ENCODE measurements at regions of chr16 and their contacts with region 1.

Region 1: GRCh38 chr16:55543472-55543871 is 23.0 kb upstream of the CAPNS2 start:
- DNase-seq: no peak
- ATAC-seq: peak in 1 of 4 donors; percentile 67
- H3K4me3 ChIP-seq: no peak overlapping the region
- H3K27ac ChIP-seq: no peak overlapping the region
- H3K4me1 ChIP-seq: peaks cover 0 to 24% (median 0%) of the 10 kb centered on the region in 12 donors
- H3K27me3 ChIP-seq: no peaks in the 10 kb centered on the region
- CTCF ChIP-seq: peak in 11 of 12 donors; percentile 20 to 69 (median 39)
- POLR2A ChIP-seq: no peak

Region 2: GRCh38 chr16:55465077-55465896 is 78.2 kb before region 1 on chr16:
- intact Hi-C with region 1: loop called (anchors 1 to 2 kb)
- DNase-seq: peak; percentile 82 to 90 (median 86)
- ATAC-seq: peak; percentile 84 to 95 (median 90)
- H3K4me3 ChIP-seq: peak overlapping the region in 1 of 12 donors; percentile 21
- H3K27ac ChIP-seq: no peak overlapping the region
- H3K4me1 ChIP-seq: peaks cover 0 to 5% (median 0%) of the 10 kb centered on the region in 12 donors
- H3K27me3 ChIP-seq: no peaks in the 10 kb centered on the region
- CTCF ChIP-seq: peak; percentile 99 to 100 (median 100)
- POLR2A ChIP-seq: no peak

Region 3: DNA sequence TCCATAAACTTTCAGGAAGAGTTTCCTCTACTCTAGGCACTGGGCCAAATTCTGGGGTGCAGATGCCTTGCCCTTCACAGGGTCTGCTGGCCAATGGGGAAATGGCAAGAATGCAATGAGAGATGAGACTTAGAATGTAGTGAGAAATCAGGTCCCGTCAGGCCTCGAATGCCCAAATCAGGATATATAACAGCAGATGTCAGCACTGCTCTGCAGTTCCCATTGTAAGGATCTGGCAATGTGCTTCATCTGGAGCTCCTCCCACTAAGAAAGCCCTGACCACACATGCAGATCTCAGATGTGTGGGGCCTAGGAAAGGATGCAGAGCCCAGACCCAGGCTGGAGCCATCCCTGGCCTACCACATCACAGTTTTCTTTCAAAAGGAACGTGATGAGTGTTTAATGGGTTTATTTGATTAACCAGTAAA is 48.5 kb before region 1 on chr16:
- intact Hi-C with region 1: loop called in 7 of 10 experiments (anchors 2 to 10 kb)
- DNase-seq: peak in 2 of 5 donors; percentile 52 to 58
- ATAC-seq: peak; percentile 67 to 93 (median 74)
- H3K4me3 ChIP-seq: no peak overlapping the region
- H3K27ac ChIP-seq: no peak overlapping the region
- H3K4me1 ChIP-seq: peaks cover 0 to 34% (median 10%) of the 10 kb centered on the region in 12 donors
- H3K27me3 ChIP-seq: no peaks in the 10 kb centered on the region
- CTCF ChIP-seq: peak in 11 of 12 donors; percentile 27 to 67 (median 46)
- POLR2A ChIP-seq: no peak

Region 4: GRCh38 chr16:55508941-55509931 is 34.2 kb before region 1 on chr16 and contains the start of gene LPCAT2:
- intact Hi-C with region 1: loop called in 1 of 10 experiments (anchors 5 kb)
- DNase-seq: peak; percentile 82 to 94 (median 90)
- ATAC-seq: peak; percentile 84 to 98 (median 96)
- H3K4me3 ChIP-seq: peak within 1 kb of the TSS; percentile 44 to 79 (median 72)
- H3K27ac ChIP-seq: peak within 1 kb of the TSS; percentile 20 to 88 (median 72)
- H3K4me1 ChIP-seq: peaks cover 0 to 25% (median under 1%) of the 10 kb centered on the region in 12 donors
- H3K27me3 ChIP-seq: no peaks in the 10 kb centered on the region
- CTCF ChIP-seq: no peak
- POLR2A ChIP-seq: peak in 1 of 2 donors; percentile 85
- total RNA-seq, gene LPCAT2: 4.1 to 13.6 (median 7.6) TPM